CD4-positive, alpha-beta T cell (primary cell): ENCODE measurements at regions of chr14 and their contacts with region 1.

Region 1: DNA sequence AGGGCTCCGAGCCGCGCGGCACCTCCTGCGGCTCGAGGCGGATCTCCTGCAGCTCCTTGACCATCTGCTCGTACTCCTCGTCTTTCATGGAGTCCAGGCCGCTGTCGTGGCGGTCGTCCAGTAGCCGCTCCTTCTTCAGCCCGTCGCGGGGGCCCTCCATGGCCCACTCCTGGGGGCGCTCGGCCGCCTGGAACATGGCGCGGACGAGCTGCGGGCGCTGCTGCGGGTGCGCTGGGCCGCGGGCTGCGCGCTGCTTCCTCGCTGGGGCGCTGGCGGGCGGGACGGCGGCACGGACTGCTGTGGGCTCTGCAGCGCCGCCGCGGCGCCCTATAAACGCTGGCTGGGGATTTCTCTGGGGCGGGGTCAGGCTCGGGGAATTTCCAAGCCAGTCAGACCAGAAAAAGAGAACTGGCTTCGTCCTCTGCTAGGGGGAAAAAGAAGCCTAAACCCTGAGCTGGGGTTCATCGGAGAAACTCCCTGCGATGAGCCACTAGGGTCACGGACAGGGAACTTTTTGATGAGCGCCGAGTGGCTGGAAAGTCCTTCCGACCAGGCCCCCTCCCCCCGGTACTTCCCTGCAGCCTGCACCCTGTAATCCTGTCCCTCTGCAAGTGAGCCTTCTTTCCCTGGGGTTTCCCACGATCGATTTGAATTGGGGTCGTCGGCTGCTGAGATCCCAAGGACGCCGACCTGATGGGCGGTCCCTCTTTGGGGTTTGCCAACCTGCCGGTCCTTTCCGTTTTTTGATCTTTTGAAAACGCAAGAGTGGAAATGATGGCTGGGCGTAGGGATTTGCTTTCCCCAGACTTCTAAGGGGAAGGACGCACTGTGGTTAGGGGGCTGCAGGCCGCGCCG is at the start of gene NFKBIA:
- DNase-seq: peak; percentile 87 to 98 (median 93)
- ATAC-seq: peak; percentile 64
- H3K4me3 ChIP-seq: peak within 1 kb of the TSS; percentile 86
- H3K4me3 Mint-ChIP-seq: peak within 1 kb of the TSS; percentile 97
- H3K27ac ChIP-seq: peak within 1 kb of the TSS; percentile 98 to 100
- H3K27ac Mint-ChIP-seq: peak within 1 kb of the TSS; percentile 100
- H3K4me1 ChIP-seq: peaks cover 42% of the 10 kb centered on the region
- H3K4me1 Mint-ChIP-seq: peaks cover 62% of the 10 kb centered on the region
- H3K27me3 ChIP-seq: no peaks in the 10 kb centered on the region
- H3K27me3 Mint-ChIP-seq: no peaks in the 10 kb centered on the region
- CTCF ChIP-seq: peak; percentile 34
- total RNA-seq, gene NFKBIA: 977 to 1,030 TPM

Region 2: GRCh38 chr14:34875031-34875922 is 529.4 kb before region 1 on chr14 and contains the start of gene BAZ1A:
- CTCF ChIA-PET with region 1: no interaction called
- POLR2A ChIA-PET with region 1: interaction called, 9 read pairs
- intact Hi-C with region 1: loop called (anchors 5 to 10 kb)
- DNase-seq: peak; percentile 1 to 82 (median 18)
- ATAC-seq: peak; percentile 9
- H3K4me3 ChIP-seq: peak within 1 kb of the TSS; percentile 96
- H3K4me3 Mint-ChIP-seq: peak within 1 kb of the TSS; percentile 100
- H3K27ac ChIP-seq: peak within 1 kb of the TSS; percentile 100
- H3K27ac Mint-ChIP-seq: peak within 1 kb of the TSS; percentile 97
- H3K4me1 ChIP-seq: peaks cover 19% of the 10 kb centered on the region
- H3K4me1 Mint-ChIP-seq: peaks cover 40% of the 10 kb centered on the region
- H3K27me3 ChIP-seq: no peaks in the 10 kb centered on the region
- H3K27me3 Mint-ChIP-seq: no peaks in the 10 kb centered on the region
- CTCF ChIP-seq: no peak
- total RNA-seq, gene BAZ1A: 46.5 to 52.3 TPM

Region 3: GRCh38 chr14:35121887-35122695 is 282.6 kb before region 1 on chr14 and contains the starts of genes PPP2R3C and PRORP:
- CTCF ChIA-PET with region 1: interaction called, 10 read pairs
- POLR2A ChIA-PET with region 1: interaction called, 97 read pairs
- intact Hi-C with region 1: loop called in 1 of 2 experiments (anchors 1 kb)
- DNase-seq: peak; percentile 82 to 98 (median 87)
- ATAC-seq: peak; percentile 81
- H3K4me3 ChIP-seq: peak within 1 kb of the TSS; percentile 75
- H3K4me3 Mint-ChIP-seq: peak within 1 kb of the TSS; percentile 100
- H3K27ac ChIP-seq: peak within 1 kb of the TSS; percentile 99
- H3K27ac Mint-ChIP-seq: peak within 1 kb of the TSS; percentile 99
- H3K4me1 ChIP-seq: peaks cover 56% of the 10 kb centered on the region
- H3K4me1 Mint-ChIP-seq: peaks cover 79% of the 10 kb centered on the region
- H3K27me3 ChIP-seq: no peaks in the 10 kb centered on the region
- H3K27me3 Mint-ChIP-seq: no peaks in the 10 kb centered on the region
- CTCF ChIP-seq: no peak
- total RNA-seq, gene PPP2R3C: 34.9 to 37.6 TPM
- total RNA-seq, gene PRORP: 27.0 to 32.0 TPM

Region 4: DNA sequence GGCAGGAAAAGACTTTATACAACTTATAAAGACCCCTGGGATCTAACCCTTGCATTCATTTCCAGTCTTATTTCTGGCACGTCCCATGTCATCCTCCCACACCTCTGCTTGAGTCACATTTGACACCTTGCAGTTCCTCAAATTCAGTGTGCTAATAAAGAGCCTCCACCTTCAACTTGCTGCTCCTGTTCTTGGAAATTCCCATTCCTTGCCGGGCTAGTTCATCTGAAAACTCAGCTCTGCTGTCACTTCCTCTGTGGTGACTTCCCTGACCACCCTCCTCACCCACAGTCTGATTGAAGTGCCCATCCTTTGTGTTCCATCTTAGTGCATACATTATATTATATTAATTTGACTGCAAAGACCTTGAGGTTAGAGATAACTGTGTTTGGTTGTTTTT is 149.9 kb before region 1 on chr14:
- CTCF ChIA-PET with region 1: no interaction called
- POLR2A ChIA-PET with region 1: no interaction called
- intact Hi-C with region 1: no loop called
- DNase-seq: peak in 2 of 14 experiments; percentile 42 to 51
- ATAC-seq: no peak
- H3K4me3 ChIP-seq: no peak overlapping the region
- H3K4me3 Mint-ChIP-seq: no peak overlapping the region
- H3K27ac ChIP-seq: no peak overlapping the region
- H3K27ac Mint-ChIP-seq: peak overlapping the region; percentile 13
- H3K4me1 ChIP-seq: no peaks in the 10 kb centered on the region
- H3K4me1 Mint-ChIP-seq: peaks cover 25% of the 10 kb centered on the region
- H3K27me3 ChIP-seq: no peaks in the 10 kb centered on the region
- H3K27me3 Mint-ChIP-seq: no peaks in the 10 kb centered on the region
- CTCF ChIP-seq: no peak

Region 5: GRCh38 chr14:35285168-35286002 is 119.3 kb before region 1 on chr14:
- CTCF ChIA-PET with region 1: interaction called, 4 read pairs
- POLR2A ChIA-PET with region 1: interaction called, 173 read pairs
- intact Hi-C with region 1: no loop called
- DNase-seq: peak in 3 of 14 experiments; percentile 51 to 63 (median 53)
- ATAC-seq: peak; percentile 54
- H3K4me3 ChIP-seq: no peak overlapping the region
- H3K4me3 Mint-ChIP-seq: no peak overlapping the region
- H3K27ac ChIP-seq: peak overlapping the region; percentile 22 to 36
- H3K27ac Mint-ChIP-seq: peak overlapping the region; percentile 74
- H3K4me1 ChIP-seq: peaks cover 29% of the 10 kb centered on the region
- H3K4me1 Mint-ChIP-seq: peaks cover 30% of the 10 kb centered on the region
- H3K27me3 ChIP-seq: no peaks in the 10 kb centered on the region
- H3K27me3 Mint-ChIP-seq: no peaks in the 10 kb centered on the region
- CTCF ChIP-seq: no peak

Region 6: GRCh38 chr14:35339761-35340406 is 64.8 kb before region 1 on chr14:
- CTCF ChIA-PET with region 1: no interaction called
- POLR2A ChIA-PET with region 1: interaction called, 11 read pairs
- intact Hi-C with region 1: no loop called
- DNase-seq: peak in 2 of 14 experiments; percentile 37 to 39
- ATAC-seq: peak; percentile 26
- H3K4me3 ChIP-seq: no peak overlapping the region
- H3K4me3 Mint-ChIP-seq: no peak overlapping the region
- H3K27ac ChIP-seq: no peak overlapping the region
- H3K27ac Mint-ChIP-seq: peak overlapping the region; percentile 7
- H3K4me1 ChIP-seq: peaks cover 41% of the 10 kb centered on the region
- H3K4me1 Mint-ChIP-seq: no peaks in the 10 kb centered on the region
- H3K27me3 ChIP-seq: no peaks in the 10 kb centered on the region
- H3K27me3 Mint-ChIP-seq: no peaks in the 10 kb centered on the region
- CTCF ChIP-seq: no peak

Region 7: GRCh38 chr14:35416108-35416750 is 11.6 kb after region 1 on chr14:
- CTCF ChIA-PET with region 1: interaction called, 18 read pairs
- POLR2A ChIA-PET with region 1: interaction called, 89 read pairs
- intact Hi-C with region 1: loop called in 1 of 2 experiments (anchors 2 kb)
- DNase-seq: peak in 10 of 14 experiments; percentile 18 to 92 (median 50)
- ATAC-seq: peak; percentile 49
- H3K4me3 ChIP-seq: no peak overlapping the region
- H3K4me3 Mint-ChIP-seq: no peak overlapping the region
- H3K27ac ChIP-seq: peak overlapping the region; percentile 47 to 54
- H3K27ac Mint-ChIP-seq: peak overlapping the region; percentile 70
- H3K4me1 ChIP-seq: peaks cover 44% of the 10 kb centered on the region
- H3K4me1 Mint-ChIP-seq: peaks cover 43% of the 10 kb centered on the region
- H3K27me3 ChIP-seq: no peaks in the 10 kb centered on the region
- H3K27me3 Mint-ChIP-seq: no peaks in the 10 kb centered on the region
- CTCF ChIP-seq: no peak

Region 8: DNA sequence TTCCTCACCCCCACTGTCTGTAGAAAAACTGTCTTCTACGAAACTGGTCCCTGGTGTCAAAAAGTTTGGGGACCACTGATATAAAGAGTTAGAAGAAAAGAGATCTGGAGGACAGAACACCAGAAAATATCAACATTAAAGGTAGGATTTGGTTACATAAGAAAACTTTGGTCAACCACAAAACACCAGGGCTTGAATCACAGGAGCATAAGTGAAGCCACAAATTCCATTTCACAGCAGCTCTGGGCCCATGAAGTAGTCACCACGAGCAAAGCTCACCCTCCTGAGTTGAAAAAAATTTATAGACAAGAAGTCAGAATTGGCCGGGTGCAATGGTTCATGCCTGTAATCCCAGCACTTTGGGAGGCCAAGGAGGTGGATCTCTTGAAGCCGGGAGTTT is 385.0 kb after region 1 on chr14:
- CTCF ChIA-PET with region 1: no interaction called
- POLR2A ChIA-PET with region 1: no interaction called
- intact Hi-C with region 1: no loop called
- DNase-seq: peak in 1 of 14 experiments; percentile 15
- ATAC-seq: no peak
- H3K4me3 ChIP-seq: no peak overlapping the region
- H3K4me3 Mint-ChIP-seq: no peak overlapping the region
- H3K27ac ChIP-seq: no peak overlapping the region
- H3K27ac Mint-ChIP-seq: no peak overlapping the region
- H3K4me1 ChIP-seq: peaks cover 2% of the 10 kb centered on the region
- H3K4me1 Mint-ChIP-seq: peaks cover 42% of the 10 kb centered on the region
- H3K27me3 ChIP-seq: no peaks in the 10 kb centered on the region
- H3K27me3 Mint-ChIP-seq: no peaks in the 10 kb centered on the region
- CTCF ChIP-seq: no peak